Activated CD8-positive, alpha-beta memory T cell treated with anti-CD3 and anti-CD28 coated beads, Interleukin-2, amount 10 ng/mL, durations not matched to agents 7 days and 5 days (primary cell): ENCODE measurements at regions of chr12 and their contacts with region 1.

Region 1: DNA sequence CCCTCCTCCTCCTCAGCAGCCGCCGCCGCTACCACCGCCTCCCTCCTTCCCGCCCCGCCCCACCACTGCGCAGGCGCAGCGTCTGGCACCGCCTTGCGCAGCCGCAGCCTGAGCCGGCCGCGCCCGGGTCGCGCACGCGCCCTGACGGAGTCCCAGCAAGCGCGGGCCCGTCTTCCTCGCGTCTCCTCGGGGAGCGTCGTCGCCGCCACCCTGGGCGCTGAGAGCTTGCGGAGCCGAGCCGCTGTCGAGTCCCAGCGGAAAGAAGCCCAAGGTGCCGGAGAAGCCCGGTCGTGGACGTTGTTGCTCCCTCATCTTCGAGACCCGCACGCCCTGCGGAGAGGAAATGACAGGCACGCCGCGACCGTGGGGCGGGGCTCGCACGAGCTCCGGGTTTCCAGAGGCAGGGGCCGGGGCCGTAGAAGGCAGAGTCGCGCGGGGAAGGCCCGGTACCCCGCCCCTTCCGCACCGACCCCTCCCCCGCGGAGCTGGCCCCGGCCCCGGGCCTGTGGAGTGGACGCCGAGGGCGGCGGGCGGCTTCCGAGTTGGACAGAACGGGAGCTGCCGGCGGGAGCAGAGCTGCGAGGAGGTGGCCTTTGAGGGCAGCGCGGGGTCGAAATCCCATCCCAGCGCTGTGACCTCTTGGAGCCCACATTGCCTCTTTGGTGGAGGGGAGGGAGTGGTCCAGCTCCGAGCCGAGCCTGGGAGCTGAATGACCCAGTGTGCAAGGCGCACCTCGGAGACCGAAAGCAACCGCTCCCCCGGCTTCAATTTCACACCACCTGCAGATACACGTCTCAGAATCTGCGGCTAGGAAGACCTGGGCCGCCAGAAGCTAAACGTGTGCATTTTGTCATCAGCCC is 469 bp upstream of the RAB35 start:
- DNase-seq: peak; percentile 98
- ATAC-seq: peak; percentile 81
- H3K4me3 Mint-ChIP-seq: peak overlapping the region; percentile 81
- H3K27ac Mint-ChIP-seq: peak overlapping the region; percentile 83
- H3K4me1 Mint-ChIP-seq: peaks cover 74% of the 10 kb centered on the region
- H3K27me3 Mint-ChIP-seq: no peaks in the 10 kb centered on the region

Region 2: DNA sequence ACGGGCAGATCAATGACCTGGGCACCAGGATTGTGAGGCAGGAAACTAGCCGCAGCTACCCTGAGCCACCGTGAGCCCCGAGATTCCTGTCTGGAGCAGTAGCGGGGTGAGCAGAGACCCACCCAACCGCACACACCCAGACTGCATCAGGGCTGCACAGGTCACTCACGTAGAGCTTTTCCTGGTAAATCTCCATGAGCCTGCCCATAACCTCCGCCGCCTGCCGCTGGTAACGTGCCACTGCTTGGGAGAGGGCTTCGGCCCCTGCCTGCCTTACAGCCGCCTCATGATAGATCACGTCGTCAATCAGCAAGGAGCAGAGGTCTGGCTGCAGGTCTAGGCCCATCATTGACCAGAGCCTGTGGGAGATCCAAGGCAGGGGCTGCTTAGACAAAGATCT is 38.0 kb after region 1 on chr12:
- CTCF ChIA-PET with region 1: no interaction called
- DNase-seq: no peak
- ATAC-seq: no peak
- H3K4me3 Mint-ChIP-seq: no peak overlapping the region
- H3K27ac Mint-ChIP-seq: peak overlapping the region; percentile 15
- H3K4me1 Mint-ChIP-seq: peaks cover 22% of the 10 kb centered on the region
- H3K27me3 Mint-ChIP-seq: no peaks in the 10 kb centered on the region

Region 3: GRCh38 chr12:120194534-120195395 is 77.7 kb after region 1 on chr12 and contains the start of gene GCN1:
- CTCF ChIA-PET with region 1: interaction called, 10 read pairs
- DNase-seq: peak; percentile 89
- ATAC-seq: peak; percentile 85
- H3K4me3 Mint-ChIP-seq: peak within 1 kb of the TSS; percentile 90
- H3K27ac Mint-ChIP-seq: peak within 1 kb of the TSS; percentile 95
- H3K4me1 Mint-ChIP-seq: peaks cover 70% of the 10 kb centered on the region
- H3K27me3 Mint-ChIP-seq: no peaks in the 10 kb centered on the region
- total RNA-seq, gene GCN1: 126 to 151 TPM